Common myeloid progenitor, CD34-positive (primary cell): ENCODE measurements at regions of chr7 and their contacts with region 1.

Region 1: DNA sequence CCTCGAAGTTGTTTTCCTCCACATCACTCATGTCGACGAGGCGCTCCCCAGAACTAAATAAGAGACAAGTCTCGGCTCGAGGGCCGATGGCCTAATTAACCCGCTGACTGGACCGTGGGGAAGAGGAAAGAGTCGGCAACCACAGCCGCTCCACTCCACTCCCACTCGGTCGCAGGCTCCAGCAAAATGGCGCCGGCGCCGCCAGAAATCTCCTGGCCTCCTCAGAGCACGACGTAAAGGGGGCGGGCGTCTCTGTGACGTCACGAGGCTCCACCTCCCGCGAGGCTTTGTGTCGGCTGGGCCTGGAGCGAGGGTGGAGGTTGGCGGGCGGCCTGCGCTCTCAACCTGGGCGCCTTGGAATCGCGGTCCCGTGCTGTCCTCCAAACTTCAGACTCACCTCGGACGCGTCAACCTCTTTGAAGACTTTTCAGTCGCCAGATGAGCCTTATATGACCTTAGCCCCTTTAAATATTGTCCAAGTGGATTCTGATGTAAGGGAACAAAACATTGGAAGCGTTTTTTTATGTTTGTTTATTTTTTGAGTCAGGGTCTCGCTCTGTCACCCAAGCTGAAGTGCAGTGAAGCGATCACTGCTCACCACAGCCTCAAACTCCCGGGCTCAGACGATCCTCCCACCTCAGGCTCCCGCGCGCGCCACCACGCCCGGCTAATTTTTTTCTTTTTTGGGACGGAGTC is at the start of gene TRA2A:
- DNase-seq: peak; percentile 93 to 96 (median 95)
- H3K4me3 ChIP-seq: peak within 1 kb of the TSS; percentile 94 to 99 (median 97)
- H3K27ac ChIP-seq: peak within 1 kb of the TSS; percentile 99
- H3K4me1 ChIP-seq: peaks cover 17 to 29% (median 23%) of the 10 kb centered on the region in 4 experiments
- H3K27me3 ChIP-seq: no peaks in the 10 kb centered on the region

Region 2: GRCh38 chr7:23357190-23358093 is 174.5 kb before region 1 on chr7:
- CTCF ChIA-PET with region 1: no interaction called
- POLR2A ChIA-PET with region 1: no interaction called
- DNase-seq: peak in 2 of 3 donors; percentile 61 to 63
- H3K4me3 ChIP-seq: no peak overlapping the region
- H3K27ac ChIP-seq: no peak overlapping the region
- H3K4me1 ChIP-seq: peaks cover 4 to 38% (median 9%) of the 10 kb centered on the region in 4 experiments
- H3K27me3 ChIP-seq: no peaks in the 10 kb centered on the region

Region 3: DNA sequence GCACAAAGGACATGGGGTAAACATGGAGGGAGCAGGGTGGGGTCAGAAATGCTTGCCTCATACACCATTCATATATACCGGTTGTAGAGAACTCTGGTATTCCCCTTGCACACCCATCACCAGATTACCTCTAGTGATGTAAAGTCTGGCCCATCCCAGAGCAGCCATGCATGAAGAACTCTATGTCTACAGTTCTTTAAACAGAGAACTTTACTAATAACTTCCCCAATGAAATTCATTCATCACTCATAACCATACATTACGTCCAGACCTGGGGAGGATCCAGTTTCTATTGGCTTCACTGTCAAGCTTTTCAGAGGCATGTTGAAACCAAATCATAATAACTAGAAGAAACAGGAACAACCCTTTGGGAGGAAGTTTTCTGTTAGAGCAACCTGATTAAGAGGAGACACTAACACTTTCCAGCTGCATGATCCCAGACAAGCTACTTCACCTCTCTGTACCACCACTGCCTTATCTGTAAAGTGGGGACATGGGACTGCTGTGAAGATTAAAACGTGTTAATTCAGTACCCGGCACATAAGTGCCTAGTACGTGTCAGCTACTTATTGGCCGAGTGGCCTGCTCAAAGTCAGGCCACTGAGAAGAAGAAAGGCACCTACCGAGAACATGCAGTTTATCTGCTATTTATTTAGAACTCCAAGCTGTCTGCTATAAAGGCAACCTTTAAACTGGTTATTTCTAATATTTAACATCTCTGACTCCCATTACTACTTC is 121.3 kb before region 1 on chr7:
- CTCF ChIA-PET with region 1: no interaction called
- POLR2A ChIA-PET with region 1: no interaction called
- DNase-seq: peak in 1 of 3 donors; percentile 23
- H3K4me3 ChIP-seq: no peak overlapping the region
- H3K27ac ChIP-seq: no peak overlapping the region
- H3K4me1 ChIP-seq: peaks cover 0 to 7% (median 0%) of the 10 kb centered on the region in 4 experiments
- H3K27me3 ChIP-seq: no peaks in the 10 kb centered on the region

Region 4: DNA sequence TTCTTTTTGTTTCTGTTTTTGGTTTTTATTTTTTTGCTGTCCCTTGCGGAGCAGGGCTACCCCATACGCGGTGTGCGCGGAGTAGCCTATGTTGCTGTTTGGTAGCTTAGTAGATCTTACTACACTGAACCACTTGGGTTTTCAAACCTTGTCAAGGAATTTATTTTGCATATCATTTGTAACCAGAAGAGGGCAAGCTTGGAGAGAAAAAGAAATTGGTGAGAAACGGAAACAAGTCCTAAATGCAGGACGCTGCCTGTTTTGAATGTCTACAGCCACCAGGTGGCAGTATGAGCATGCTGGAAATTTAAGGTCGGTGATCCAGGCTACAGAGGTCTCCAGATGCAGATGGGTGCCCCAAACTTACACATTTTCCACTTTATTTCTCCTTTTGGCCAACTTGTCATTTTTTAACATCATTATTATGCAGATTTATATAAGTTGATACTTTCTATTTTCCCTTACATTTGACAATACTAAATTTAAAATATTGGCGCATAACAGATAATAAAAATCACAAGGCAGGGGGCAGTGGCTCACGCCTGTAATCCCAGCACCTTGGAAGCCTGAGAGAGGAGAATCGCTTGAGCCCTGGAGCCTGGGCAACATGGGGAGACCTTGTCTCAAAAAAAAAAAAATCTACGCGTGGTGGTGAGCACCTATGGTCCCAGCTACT is 15.1 kb after region 1 on chr7:
- CTCF ChIA-PET with region 1: interaction called, 12 read pairs
- POLR2A ChIA-PET with region 1: interaction called, 3 read pairs
- DNase-seq: peak; percentile 93 to 97 (median 95)
- H3K4me3 ChIP-seq: no peak overlapping the region
- H3K27ac ChIP-seq: no peak overlapping the region
- H3K4me1 ChIP-seq: peaks cover 0 to 8% (median 1%) of the 10 kb centered on the region in 4 experiments
- H3K27me3 ChIP-seq: no peaks in the 10 kb centered on the region